ENCODE measurements at regions of chr20 and their contacts with region 1.

Region 1: DNA sequence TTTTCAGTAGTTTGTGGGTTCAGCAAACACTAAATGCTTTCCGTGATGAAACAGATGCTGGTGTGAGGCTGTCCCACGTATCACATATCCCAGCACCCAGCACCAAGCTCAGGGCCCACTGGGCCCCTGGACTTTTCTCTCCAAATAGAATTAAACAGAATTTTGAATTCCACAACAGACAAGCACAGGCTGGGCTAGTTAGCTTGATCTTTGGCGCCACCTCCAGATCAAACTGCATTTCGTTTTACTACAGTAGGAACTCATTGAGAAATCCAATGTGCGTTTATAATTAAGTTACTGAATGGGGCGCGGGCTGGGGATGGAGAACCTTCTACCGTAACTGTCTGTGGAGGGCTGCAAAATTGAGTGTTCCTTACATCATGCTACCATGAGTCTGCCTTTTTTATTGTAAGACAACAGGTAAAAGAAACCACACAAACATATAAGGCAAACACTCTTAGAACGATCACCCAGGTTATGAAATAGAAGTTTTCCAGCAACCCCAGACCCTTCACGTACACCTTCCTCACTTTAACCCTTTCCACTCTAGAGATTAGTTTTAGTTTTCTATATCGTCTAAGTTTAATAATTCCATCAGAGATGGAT is 107.8 kb downstream of the ZFP64 start:
- DNase-seq: peak; percentile 83
- H3K4me3 Mint-ChIP-seq: no peak overlapping the region
- H3K27ac Mint-ChIP-seq: no peak overlapping the region
- H3K4me1 Mint-ChIP-seq: peaks cover 12% of the 10 kb centered on the region
- H3K27me3 Mint-ChIP-seq: no peaks in the 10 kb centered on the region

Region 2: DNA sequence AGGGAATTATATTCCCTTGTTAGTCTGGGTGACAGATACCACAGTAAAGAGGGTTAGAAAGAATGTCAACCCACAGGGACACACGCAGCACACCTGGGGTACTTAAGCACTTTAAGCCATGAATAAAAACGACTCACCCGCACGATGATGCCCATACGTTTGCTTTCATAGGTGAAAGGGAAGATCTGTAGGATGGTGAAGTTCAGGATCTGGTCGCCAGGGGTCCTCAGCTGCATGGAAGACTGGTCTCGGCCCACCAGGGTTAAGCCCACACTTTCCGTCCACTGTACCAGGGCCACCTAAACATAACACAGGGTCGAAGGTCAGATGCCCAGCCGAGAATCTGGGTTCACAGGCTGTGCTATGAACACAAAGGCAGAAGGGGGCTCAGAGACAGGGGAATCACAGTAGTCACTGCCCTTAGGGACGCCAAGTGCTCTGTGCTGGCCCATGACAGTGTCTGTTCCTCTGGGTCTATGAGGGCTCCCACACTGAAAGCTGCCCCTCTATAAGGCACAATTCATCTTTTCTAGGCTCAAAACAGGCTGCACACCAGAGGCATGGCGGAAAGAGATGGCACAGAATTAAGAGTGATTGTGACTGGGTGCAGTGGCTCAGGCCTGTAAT is 444.4 kb before region 1 on chr20:
- intact Hi-C with region 1: loop called (anchors 2 kb)
- DNase-seq: peak; percentile 82
- H3K4me3 Mint-ChIP-seq: no peak overlapping the region
- H3K27ac Mint-ChIP-seq: no peak overlapping the region
- H3K4me1 Mint-ChIP-seq: peaks cover 3% of the 10 kb centered on the region
- H3K27me3 Mint-ChIP-seq: peaks cover 2% of the 10 kb centered on the region

Region 3: GRCh38 chr20:51703400-51704287 is 380.1 kb before region 1 on chr20:
- intact Hi-C with region 1: loop called (anchors 5 kb)
- DNase-seq: no peak
- H3K4me3 Mint-ChIP-seq: no peak overlapping the region
- H3K27ac Mint-ChIP-seq: no peak overlapping the region
- H3K4me1 Mint-ChIP-seq: peaks cover 6% of the 10 kb centered on the region
- H3K27me3 Mint-ChIP-seq: peaks cover 22% of the 10 kb centered on the region

Region 4: DNA sequence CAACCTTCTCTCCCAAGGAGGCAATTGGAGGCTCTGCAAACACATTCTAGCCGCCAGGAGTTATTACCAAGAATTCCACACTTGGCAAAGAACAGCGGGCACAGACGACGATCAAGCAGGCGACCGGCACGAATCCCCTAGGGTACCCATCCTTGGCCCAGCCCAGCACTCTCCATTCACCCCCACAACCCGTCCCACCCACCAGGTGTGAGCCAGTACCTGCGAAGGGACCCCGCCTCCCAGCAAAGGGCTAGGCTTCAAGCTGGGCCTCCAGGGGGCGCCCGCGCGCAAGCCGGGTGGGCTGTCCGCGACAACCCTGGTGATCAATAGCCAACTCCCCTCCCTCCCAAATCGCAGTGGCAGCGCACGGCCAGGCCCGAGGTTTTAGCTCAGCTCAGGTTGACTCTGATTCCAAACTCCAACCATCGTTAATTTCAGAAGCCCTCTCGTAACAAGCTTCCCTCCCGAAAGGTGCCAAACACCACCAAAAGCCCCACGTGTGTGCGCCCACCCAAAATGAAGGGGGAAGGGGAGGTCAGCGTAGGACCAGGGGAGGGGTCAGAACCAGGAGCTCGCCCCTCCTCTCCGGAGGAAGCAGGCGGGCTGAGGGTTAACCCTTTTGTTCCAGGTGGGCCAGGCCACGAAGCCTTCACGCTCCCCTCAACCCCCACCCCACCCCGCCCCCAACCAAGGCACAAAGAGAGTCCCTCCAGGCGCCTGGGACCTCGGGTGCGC is 283.5 kb before region 1 on chr20:
- intact Hi-C with region 1: loop called (anchors 2 kb)
- DNase-seq: peak; percentile 90
- H3K4me3 Mint-ChIP-seq: peak overlapping the region; percentile 74
- H3K27ac Mint-ChIP-seq: no peak overlapping the region
- H3K4me1 Mint-ChIP-seq: peaks cover 2% of the 10 kb centered on the region
- H3K27me3 Mint-ChIP-seq: peaks cover 60% of the 10 kb centered on the region